ENCODE measurements at regions of chr16 and their contacts with region 1.

Region 1: GRCh38 chr16:67428146-67428731 is 2.7 kb upstream of the HSD11B2 start:
- DNase-seq: peak; percentile 89
- H3K4me3 Mint-ChIP-seq: no peak overlapping the region
- H3K27ac Mint-ChIP-seq: no peak overlapping the region
- H3K4me1 Mint-ChIP-seq: peaks cover 12% of the 10 kb centered on the region
- H3K27me3 Mint-ChIP-seq: peaks cover 57% of the 10 kb centered on the region

Region 2: GRCh38 chr16:67100569-67101310 is 327.5 kb before region 1 on chr16:
- intact Hi-C with region 1: no loop called
- DNase-seq: no peak
- H3K4me3 Mint-ChIP-seq: no peak overlapping the region
- H3K27ac Mint-ChIP-seq: no peak overlapping the region
- H3K4me1 Mint-ChIP-seq: no peaks in the 10 kb centered on the region
- H3K27me3 Mint-ChIP-seq: no peaks in the 10 kb centered on the region

Region 3: GRCh38 chr16:67384778-67385510 is 43.3 kb before region 1 on chr16:
- intact Hi-C with region 1: no loop called
- DNase-seq: no peak
- H3K4me3 Mint-ChIP-seq: no peak overlapping the region
- H3K27ac Mint-ChIP-seq: peak overlapping the region; percentile 1
- H3K4me1 Mint-ChIP-seq: no peaks in the 10 kb centered on the region
- H3K27me3 Mint-ChIP-seq: peaks cover 18% of the 10 kb centered on the region

Region 4: DNA sequence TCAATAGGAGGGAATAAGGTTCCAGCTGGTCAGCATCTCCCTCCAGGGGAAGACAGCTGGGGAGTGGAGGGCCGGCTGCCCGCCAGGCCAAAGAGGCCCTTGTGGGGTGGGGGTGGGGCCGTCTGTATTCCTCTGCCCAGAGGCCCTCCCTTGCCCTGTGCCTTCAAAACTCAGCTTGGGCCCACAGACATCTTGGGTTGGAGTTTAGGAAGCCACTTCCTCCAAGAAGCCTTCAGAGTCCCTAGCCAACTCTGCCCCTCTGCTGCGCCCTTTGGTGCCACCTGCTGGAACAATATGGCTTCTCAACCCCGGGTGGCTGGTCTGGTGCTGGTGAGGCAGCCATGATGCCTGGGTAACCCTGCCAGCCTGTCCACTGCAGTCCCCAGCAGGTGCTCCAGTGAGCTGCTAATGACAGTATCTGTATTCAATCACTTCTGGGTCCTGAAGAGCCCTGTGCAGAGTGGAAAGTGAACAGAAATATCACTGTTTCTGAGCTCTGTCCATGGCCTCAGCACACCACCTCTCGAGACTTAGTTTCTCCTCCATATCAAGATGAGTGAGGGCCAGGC is 19.4 kb after region 1 on chr16:
- intact Hi-C with region 1: loop called (anchors 1 kb)
- DNase-seq: peak; percentile 93
- H3K4me3 Mint-ChIP-seq: no peak overlapping the region
- H3K27ac Mint-ChIP-seq: no peak overlapping the region
- H3K4me1 Mint-ChIP-seq: no peaks in the 10 kb centered on the region
- H3K27me3 Mint-ChIP-seq: no peaks in the 10 kb centered on the region

Region 5: DNA sequence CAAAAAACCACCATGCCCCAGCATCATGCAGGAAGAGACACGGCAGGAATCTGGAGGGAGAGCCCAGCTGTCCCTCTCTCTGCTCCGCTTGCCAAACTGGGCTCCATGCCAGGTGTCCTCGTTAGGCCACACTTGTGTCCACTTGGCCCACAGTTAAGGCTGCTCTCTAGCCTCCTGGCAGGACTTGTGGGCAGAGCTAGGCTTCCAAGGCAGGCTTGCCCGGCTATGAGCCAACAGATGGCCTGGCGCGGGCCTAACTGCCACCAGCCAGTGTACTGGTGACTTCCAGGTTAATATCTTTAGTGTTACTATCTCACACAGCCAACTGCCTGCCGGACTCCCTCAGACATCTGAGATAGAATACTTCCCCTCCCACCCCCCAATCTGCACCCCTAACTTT is 42.1 kb after region 1 on chr16:
- intact Hi-C with region 1: loop called (anchors 1 kb)
- DNase-seq: no peak
- H3K4me3 Mint-ChIP-seq: no peak overlapping the region
- H3K27ac Mint-ChIP-seq: no peak overlapping the region
- H3K4me1 Mint-ChIP-seq: peaks cover 6% of the 10 kb centered on the region
- H3K27me3 Mint-ChIP-seq: no peaks in the 10 kb centered on the region

Measured in activated CD4-positive, alpha-beta T cell treated with anti-CD3 and anti-CD28 coated beads, Interleukin-2, amount 10 ng/mL, durations not matched to agents 24 days and 14 days (primary cell).